ENCODE measurements at regions of chrX and their contacts with region 1.

Region 1: DNA sequence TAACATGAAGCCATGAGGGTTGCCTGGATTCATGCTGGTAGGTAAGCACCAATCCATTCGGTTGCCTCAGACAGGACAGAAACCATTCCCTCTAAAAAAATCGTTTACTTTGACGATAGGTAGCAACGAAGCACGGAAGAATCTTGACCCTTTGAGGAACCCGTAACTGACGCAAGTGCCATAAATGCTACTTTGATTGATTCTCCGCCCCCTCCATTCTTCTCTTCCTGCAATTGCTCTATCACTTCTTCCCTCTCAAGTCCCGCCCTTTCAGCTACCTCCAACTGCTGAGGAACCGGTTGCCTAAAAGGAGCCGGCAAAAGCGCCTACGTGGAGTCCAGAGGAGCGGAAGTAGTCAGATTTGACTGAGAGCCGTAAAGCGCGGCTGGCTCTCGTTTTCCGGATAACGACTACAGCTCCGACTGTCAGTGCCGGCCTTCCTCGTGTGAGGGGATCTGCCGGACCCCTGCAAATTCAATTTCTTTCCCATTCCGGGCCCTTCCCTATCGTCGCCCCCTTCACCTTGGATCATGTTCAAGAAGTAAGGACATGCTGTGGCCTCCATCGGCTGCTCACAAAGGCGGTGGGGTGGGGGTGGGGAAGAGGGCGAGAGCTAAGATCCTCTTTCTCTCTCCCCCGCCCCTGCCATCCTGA is at the start of gene MCTS1:
- DNase-seq: peak; percentile 55 to 91
- ATAC-seq: peak; percentile 82 to 91 (median 89)
- H3K4me3 ChIP-seq: peak within 1 kb of the TSS; percentile 78
- H3K4me3 Mint-ChIP-seq: peak within 1 kb of the TSS; percentile 94
- H3K27ac ChIP-seq: peak within 1 kb of the TSS; percentile 87
- H3K27ac Mint-ChIP-seq: peak within 1 kb of the TSS; percentile 91 to 99
- H3K4me1 ChIP-seq: peaks cover 4% of the 10 kb centered on the region
- H3K4me1 Mint-ChIP-seq: peaks cover 10 to 15% of the 10 kb centered on the region in 2 donors
- H3K27me3 ChIP-seq: no peaks in the 10 kb centered on the region
- H3K27me3 Mint-ChIP-seq: no peaks in the 10 kb centered on the region
- CTCF ChIP-seq: no peak
- total RNA-seq, gene MCTS1: 17.6 to 21.2 (median 18.8) TPM

Region 2: DNA sequence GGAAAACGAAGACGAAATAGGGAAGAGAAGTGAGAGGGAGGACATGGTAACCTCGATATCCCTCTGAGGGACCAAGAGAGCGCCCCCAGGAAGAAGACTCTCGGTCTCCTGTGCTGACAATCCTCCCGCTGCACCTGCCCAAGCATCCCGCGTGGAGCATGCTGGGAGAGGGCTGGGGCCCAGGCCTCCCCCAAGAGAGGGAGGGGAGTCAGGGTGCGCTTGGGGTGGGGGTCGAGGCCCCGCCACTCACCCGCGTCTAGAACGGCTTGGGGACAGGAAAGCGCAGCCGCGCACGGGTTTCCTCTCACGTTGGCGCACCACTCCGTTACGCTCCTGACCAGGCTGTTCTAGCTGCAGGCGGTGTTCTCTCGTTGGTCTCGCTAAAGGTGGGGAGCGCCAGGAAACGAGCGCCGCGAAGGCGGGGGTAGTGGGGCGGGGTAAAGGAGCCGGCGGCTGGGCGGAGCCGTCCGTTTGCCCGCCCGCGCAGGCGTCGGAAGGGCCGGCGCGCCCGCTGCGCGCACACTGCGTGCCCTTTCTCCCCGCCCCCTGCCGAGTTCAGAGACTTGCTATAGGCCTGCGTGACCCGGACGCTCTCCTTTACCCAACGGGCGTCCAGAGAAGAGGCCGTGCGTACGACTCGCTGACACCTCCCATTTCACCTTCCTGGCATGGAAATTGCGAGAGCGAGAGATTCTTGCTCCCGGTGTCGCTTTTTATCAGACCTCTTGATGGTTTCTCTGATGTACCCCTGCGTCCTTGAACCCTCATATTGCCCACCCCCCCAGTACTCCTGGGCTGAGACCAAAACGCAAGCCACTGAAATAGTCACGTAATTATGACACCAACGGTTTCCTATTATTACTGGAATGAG is 26.1 kb after region 1 on chrX and contains the start of gene C1GALT1C1:
- intact Hi-C with region 1: loop called (anchors 1 kb)
- DNase-seq: peak; percentile 83 to 95
- ATAC-seq: peak; percentile 92 to 98 (median 93)
- H3K4me3 ChIP-seq: peak within 1 kb of the TSS; percentile 70
- H3K4me3 Mint-ChIP-seq: peak within 1 kb of the TSS; percentile 93
- H3K27ac ChIP-seq: peak within 1 kb of the TSS; percentile 98
- H3K27ac Mint-ChIP-seq: peak within 1 kb of the TSS; percentile 92 to 99
- H3K4me1 ChIP-seq: peaks cover 6% of the 10 kb centered on the region
- H3K4me1 Mint-ChIP-seq: peaks cover 5 to 10% of the 10 kb centered on the region in 2 donors
- H3K27me3 ChIP-seq: no peaks in the 10 kb centered on the region
- H3K27me3 Mint-ChIP-seq: no peaks in the 10 kb centered on the region
- CTCF ChIP-seq: no peak
- total RNA-seq, gene C1GALT1C1: 6.2 to 9.7 (median 6.7) TPM

Measured in natural killer cell (primary cell).